Heart left ventricle (tissue), 16 donors: ENCODE measurements at regions of chr15 and their contacts with region 1.

Region 1: DNA sequence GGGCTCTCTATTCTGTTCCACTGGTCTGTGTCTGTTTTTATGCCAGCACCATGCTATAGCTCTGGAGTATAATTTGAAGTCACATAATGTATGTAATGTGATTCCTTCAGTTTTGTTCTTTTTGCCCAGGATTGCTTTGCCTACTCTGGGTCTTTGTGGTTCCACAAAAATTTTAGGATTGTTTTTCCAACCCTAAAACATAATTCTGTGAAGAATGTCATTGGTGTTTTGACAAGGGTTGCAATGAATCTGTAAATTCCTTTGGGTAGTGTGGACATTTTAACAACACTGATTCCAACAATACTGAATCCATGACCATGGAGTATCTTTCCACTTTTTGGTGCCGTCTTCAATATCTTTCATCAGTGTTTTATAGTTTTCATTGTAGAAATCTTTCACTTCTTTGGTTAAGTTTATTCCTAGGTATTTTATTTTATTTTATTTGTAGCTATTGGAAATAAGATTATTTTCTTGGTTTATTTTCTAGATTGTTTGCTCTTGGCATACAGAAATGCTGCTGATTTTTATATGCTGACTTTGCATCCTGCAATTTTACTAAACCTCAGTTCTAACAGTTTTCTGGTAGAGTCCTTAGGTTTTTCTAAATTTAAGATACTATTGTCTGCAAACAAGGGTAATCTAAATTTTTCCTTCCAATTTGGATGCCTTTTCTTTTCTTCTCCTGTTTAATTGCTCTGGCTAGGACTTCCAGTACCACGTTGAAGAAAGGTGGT is 29.7 kb downstream of the TJP1 start:
- DNase-seq: no peak
- ATAC-seq: no peak
- H3K4me3 ChIP-seq: no peak overlapping the region
- H3K27ac ChIP-seq: no peak overlapping the region
- H3K4me1 ChIP-seq: peaks cover 0 to 41% (median 17%) of the 10 kb centered on the region in 12 donors
- H3K27me3 ChIP-seq: no peaks in the 10 kb centered on the region
- CTCF ChIP-seq: no peak
- POLR2A ChIP-seq: no peak

Region 2: GRCh38 chr15:29859973-29860715 is 67.6 kb after region 1 on chr15:
- intact Hi-C with region 1: loop called in 1 of 10 experiments (anchors 10 kb)
- DNase-seq: no peak
- ATAC-seq: no peak
- H3K4me3 ChIP-seq: no peak overlapping the region
- H3K27ac ChIP-seq: peak overlapping the region in 10 of 12 donors; percentile 2 to 69 (median 46)
- H3K4me1 ChIP-seq: peaks cover 0 to 25% (median 7%) of the 10 kb centered on the region in 12 donors
- H3K27me3 ChIP-seq: no peaks in the 10 kb centered on the region
- CTCF ChIP-seq: no peak
- POLR2A ChIP-seq: no peak

Region 3: GRCh38 chr15:30030350-30030749 is 237.8 kb after region 1 on chr15:
- intact Hi-C with region 1: no loop called
- DNase-seq: no peak
- ATAC-seq: no peak
- H3K4me3 ChIP-seq: no peak overlapping the region
- H3K27ac ChIP-seq: no peak overlapping the region
- H3K4me1 ChIP-seq: no peaks in the 10 kb centered on the region
- H3K27me3 ChIP-seq: no peaks in the 10 kb centered on the region
- CTCF ChIP-seq: no peak
- POLR2A ChIP-seq: no peak